ENCODE measurements at regions of chr11 and their contacts with region 1.

Region 1: GRCh38 chr11:44997566-44997965 is 46.9 kb upstream of the TP53I11 start:
- DNase-seq: no peak
- ATAC-seq: no peak
- H3K4me3 Mint-ChIP-seq: no peak overlapping the region
- H3K27ac Mint-ChIP-seq: no peak overlapping the region
- H3K4me1 Mint-ChIP-seq: peaks cover 2% of the 10 kb centered on the region
- H3K27me3 Mint-ChIP-seq: no peaks in the 10 kb centered on the region
- CTCF ChIP-seq: no peak

Region 2: GRCh38 chr11:45017329-45017728 is 19.8 kb after region 1 on chr11:
- CTCF ChIA-PET with region 1: interaction called, 3 read pairs
- POLR2A ChIA-PET with region 1: no interaction called
- intact Hi-C with region 1: loop called (anchors 2 kb)
- DNase-seq: no peak
- ATAC-seq: no peak
- H3K4me3 Mint-ChIP-seq: no peak overlapping the region
- H3K27ac Mint-ChIP-seq: no peak overlapping the region
- H3K4me1 Mint-ChIP-seq: peaks cover 25% of the 10 kb centered on the region
- H3K27me3 Mint-ChIP-seq: peaks cover 6% of the 10 kb centered on the region
- CTCF ChIP-seq: no peak

Region 3: DNA sequence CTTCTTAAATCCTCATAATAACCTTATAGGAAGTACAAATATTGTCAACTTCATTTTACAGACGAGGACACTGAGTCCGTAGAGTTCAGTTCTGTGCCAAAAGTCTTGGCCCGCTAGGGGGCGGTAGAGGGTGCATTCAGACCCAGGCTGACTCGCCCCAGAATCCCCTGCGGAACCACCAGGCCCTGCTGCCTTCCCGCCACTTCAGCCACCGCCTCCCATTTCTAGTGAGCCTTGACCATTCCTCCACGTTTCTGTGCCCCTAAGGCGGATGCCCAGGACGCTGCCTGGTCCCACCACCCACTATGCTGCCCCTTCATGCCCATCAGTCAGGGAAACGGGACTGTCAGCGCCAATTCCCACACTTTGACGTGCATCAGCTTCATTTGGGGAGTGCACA is 269.5 kb after region 1 on chr11:
- CTCF ChIA-PET with region 1: no interaction called
- POLR2A ChIA-PET with region 1: no interaction called
- intact Hi-C with region 1: no loop called
- DNase-seq: no peak
- ATAC-seq: no peak
- H3K4me3 Mint-ChIP-seq: no peak overlapping the region
- H3K27ac Mint-ChIP-seq: no peak overlapping the region
- H3K4me1 Mint-ChIP-seq: no peaks in the 10 kb centered on the region
- H3K27me3 Mint-ChIP-seq: peaks cover 34% of the 10 kb centered on the region
- CTCF ChIP-seq: no peak

Measured in activated B cell treated with CpG ODN at 0.5 μM for 24 hours (primary cell).